ENCODE measurements at regions of chr3 and their contacts with region 1.

Region 1: GRCh38 chr3:73502609-73503583 is 121.8 kb downstream of the PDZRN3 start:
- DNase-seq: peak; percentile 80
- H3K4me3 ChIP-seq: no peak overlapping the region; a peak in 1 of 4 replicates
- H3K27ac ChIP-seq: peak overlapping the region; percentile 66 to 71
- H3K4me1 ChIP-seq: peaks cover 8 to 19% of the 10 kb centered on the region in 2 experiments; a peak in 3 of 4 replicates
- H3K27me3 ChIP-seq: no peaks in the 10 kb centered on the region
- CTCF ChIP-seq: peak; percentile 89
- EP300 ChIP-seq: peak; percentile 26 to 61; a peak in 2 of 4 replicates
- RAD21 ChIP-seq: peak; percentile 99

Region 2: GRCh38 chr3:72996473-72997333 is 506.2 kb before region 1 on chr3 and contains the start of gene PPP4R2:
- CTCF ChIA-PET with region 1: no interaction called
- POLR2A ChIA-PET with region 1: no interaction called
- DNase-seq: peak; percentile 94
- H3K4me3 ChIP-seq: peak within 1 kb of the TSS; percentile 78 to 83
- H3K27ac ChIP-seq: peak within 1 kb of the TSS; percentile 90 to 92
- H3K4me1 ChIP-seq: peaks cover 3 to 11% of the 10 kb centered on the region in 2 experiments; a peak in 2 of 4 replicates
- H3K27me3 ChIP-seq: no peaks in the 10 kb centered on the region
- CTCF ChIP-seq: no peak; the same call in 1 of the 2 replicates
- EP300 ChIP-seq: no peak
- RAD21 ChIP-seq: no peak
- polyA plus RNA-seq, gene PPP4R2: 8.9 and 11.3 TPM in 2 replicates

Region 3: GRCh38 chr3:73100741-73101559 is 401.9 kb before region 1 on chr3:
- CTCF ChIA-PET with region 1: interaction called, 104 read pairs
- POLR2A ChIA-PET with region 1: no interaction called
- DNase-seq: peak; percentile 90
- H3K4me3 ChIP-seq: peak overlapping the region in 1 of 2 experiments; percentile 26; a peak in 1 of 4 replicates
- H3K27ac ChIP-seq: no peak overlapping the region
- H3K4me1 ChIP-seq: peaks cover 0 to 4% of the 10 kb centered on the region in 2 experiments; a peak in 1 of 4 replicates
- H3K27me3 ChIP-seq: no peaks in the 10 kb centered on the region
- CTCF ChIP-seq: peak; percentile 96
- EP300 ChIP-seq: no peak
- RAD21 ChIP-seq: peak; percentile 98

Region 4: GRCh38 chr3:73192035-73192738 is 310.7 kb before region 1 on chr3:
- CTCF ChIA-PET with region 1: interaction called, 18 read pairs
- POLR2A ChIA-PET with region 1: no interaction called
- DNase-seq: peak; percentile 61
- H3K4me3 ChIP-seq: no peak overlapping the region; a peak in 2 of 4 replicates
- H3K27ac ChIP-seq: peak overlapping the region in 1 of 2 experiments; percentile 91; a peak in 2 of 4 replicates
- H3K4me1 ChIP-seq: peaks cover 0 to 8% of the 10 kb centered on the region in 2 experiments; a peak in 2 of 4 replicates
- H3K27me3 ChIP-seq: no peaks in the 10 kb centered on the region
- CTCF ChIP-seq: peak; percentile 38; the same call in 1 of the 2 replicates
- EP300 ChIP-seq: peak in 1 of 2 experiments; percentile 96; a peak in 2 of 4 replicates
- RAD21 ChIP-seq: peak; percentile 64

Region 5: GRCh38 chr3:73453666-73454065 is 49.2 kb before region 1 on chr3:
- CTCF ChIA-PET with region 1: interaction called, 65 read pairs
- POLR2A ChIA-PET with region 1: no interaction called
- DNase-seq: no peak
- H3K4me3 ChIP-seq: no peak overlapping the region
- H3K27ac ChIP-seq: no peak overlapping the region; a peak in 1 of 4 replicates
- H3K4me1 ChIP-seq: peaks cover 13 to 14% of the 10 kb centered on the region in 2 experiments; a peak in 3 of 4 replicates
- H3K27me3 ChIP-seq: no peaks in the 10 kb centered on the region
- CTCF ChIP-seq: no peak
- EP300 ChIP-seq: no peak
- RAD21 ChIP-seq: no peak

Region 6: GRCh38 chr3:73484656-73485248 is 18.1 kb before region 1 on chr3:
- CTCF ChIA-PET with region 1: interaction called, 52 read pairs
- POLR2A ChIA-PET with region 1: interaction called, 4 read pairs
- DNase-seq: no peak
- H3K4me3 ChIP-seq: no peak overlapping the region
- H3K27ac ChIP-seq: peak overlapping the region; percentile 71 to 96
- H3K4me1 ChIP-seq: peaks cover 14 to 54% of the 10 kb centered on the region in 2 experiments
- H3K27me3 ChIP-seq: no peaks in the 10 kb centered on the region
- CTCF ChIP-seq: no peak
- EP300 ChIP-seq: no peak
- RAD21 ChIP-seq: no peak

Region 7: DNA sequence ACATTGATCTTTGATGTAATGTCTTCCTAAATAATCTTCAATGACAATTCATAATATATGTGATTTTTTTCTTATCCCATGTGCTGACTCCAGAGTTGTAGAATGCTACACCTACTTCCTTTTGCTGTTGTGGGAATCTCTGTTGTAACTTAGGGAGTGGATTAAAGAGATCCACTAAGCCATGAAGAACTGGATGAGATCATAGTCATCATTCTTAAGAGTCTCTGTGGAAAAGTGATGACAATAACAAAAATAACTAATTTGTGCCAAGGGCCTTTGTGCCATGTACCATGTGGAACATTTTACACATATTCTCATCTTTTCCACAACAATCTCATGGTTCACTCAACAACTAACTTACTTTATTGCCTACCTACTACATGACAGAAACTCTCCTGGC is 284.7 kb after region 1 on chr3:
- CTCF ChIA-PET with region 1: no interaction called
- POLR2A ChIA-PET with region 1: no interaction called
- DNase-seq: no peak
- H3K4me3 ChIP-seq: no peak overlapping the region
- H3K27ac ChIP-seq: peak overlapping the region in 1 of 2 experiments; percentile 98; a peak in 3 of 4 replicates
- H3K4me1 ChIP-seq: peaks cover 12 to 13% of the 10 kb centered on the region in 2 experiments
- H3K27me3 ChIP-seq: no peaks in the 10 kb centered on the region
- CTCF ChIP-seq: no peak
- EP300 ChIP-seq: no peak
- RAD21 ChIP-seq: no peak